Activated CD4-positive, alpha-beta T cell treated with anti-CD3 and anti-CD28 coated beads for 36 hours (primary cell): ENCODE measurements at regions of chr7 and their contacts with region 1.

Region 1: GRCh38 chr7:43700059-43700501 is 29.2 kb downstream of the COA1 start:
- DNase-seq: no peak
- ATAC-seq: peak; percentile 42
- H3K4me3 Mint-ChIP-seq: no peak overlapping the region
- H3K27ac Mint-ChIP-seq: no peak overlapping the region
- H3K4me1 Mint-ChIP-seq: peaks cover 56% of the 10 kb centered on the region
- H3K27me3 Mint-ChIP-seq: no peaks in the 10 kb centered on the region

Region 2: GRCh38 chr7:43572516-43573049 is 127.5 kb before region 1 on chr7:
- CTCF ChIA-PET with region 1: interaction called, 22 read pairs
- POLR2A ChIA-PET with region 1: no interaction called
- intact Hi-C with region 1: no loop called
- DNase-seq: peak; percentile 65
- ATAC-seq: peak; percentile 91
- H3K4me3 Mint-ChIP-seq: no peak overlapping the region
- H3K27ac Mint-ChIP-seq: no peak overlapping the region
- H3K4me1 Mint-ChIP-seq: peaks cover 24% of the 10 kb centered on the region
- H3K27me3 Mint-ChIP-seq: peaks cover 2% of the 10 kb centered on the region

Region 3: GRCh38 chr7:43619213-43620012 is 80.7 kb before region 1 on chr7:
- CTCF ChIA-PET with region 1: interaction called, 19 read pairs
- POLR2A ChIA-PET with region 1: interaction called, 4 read pairs
- intact Hi-C with region 1: loop called in 1 of 2 experiments (anchors 2 kb)
- DNase-seq: no peak
- ATAC-seq: no peak
- H3K4me3 Mint-ChIP-seq: no peak overlapping the region
- H3K27ac Mint-ChIP-seq: no peak overlapping the region
- H3K4me1 Mint-ChIP-seq: peaks cover 54% of the 10 kb centered on the region
- H3K27me3 Mint-ChIP-seq: no peaks in the 10 kb centered on the region

Region 4: DNA sequence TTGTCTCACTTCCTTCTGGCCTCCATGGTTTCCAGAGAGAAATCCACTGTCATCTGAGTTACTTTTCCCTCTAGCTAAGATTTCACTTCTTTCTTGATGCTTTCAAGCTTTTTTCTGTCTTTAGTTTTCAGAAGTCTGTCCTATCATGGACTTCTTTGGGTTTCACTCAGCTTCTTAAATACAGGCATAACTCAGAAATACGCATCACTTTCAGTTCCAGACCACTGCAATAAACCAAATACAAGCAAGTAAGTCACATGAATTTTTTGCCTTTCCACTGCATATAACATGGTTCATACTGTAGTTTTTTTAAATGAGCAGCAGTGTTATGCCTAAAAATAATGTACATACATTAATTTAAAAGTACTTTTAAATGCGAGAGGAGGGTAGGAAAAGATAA is 68.5 kb before region 1 on chr7:
- CTCF ChIA-PET with region 1: interaction called, 13 read pairs
- POLR2A ChIA-PET with region 1: no interaction called
- intact Hi-C with region 1: no loop called
- DNase-seq: no peak
- ATAC-seq: peak; percentile 70
- H3K4me3 Mint-ChIP-seq: no peak overlapping the region
- H3K27ac Mint-ChIP-seq: peak overlapping the region; percentile 79
- H3K4me1 Mint-ChIP-seq: peaks cover 90% of the 10 kb centered on the region
- H3K27me3 Mint-ChIP-seq: no peaks in the 10 kb centered on the region

Region 5: GRCh38 chr7:43647673-43648472 is 52.2 kb before region 1 on chr7:
- CTCF ChIA-PET with region 1: interaction called, 54 read pairs
- POLR2A ChIA-PET with region 1: interaction called, 7 read pairs
- intact Hi-C with region 1: loop called (anchors 1 kb)
- DNase-seq: peak; percentile 77
- ATAC-seq: peak; percentile 74
- H3K4me3 Mint-ChIP-seq: peak overlapping the region; percentile 66
- H3K27ac Mint-ChIP-seq: peak overlapping the region; percentile 98
- H3K4me1 Mint-ChIP-seq: peaks cover 95% of the 10 kb centered on the region
- H3K27me3 Mint-ChIP-seq: no peaks in the 10 kb centered on the region

Region 6: GRCh38 chr7:43669286-43670081 is 30.6 kb before region 1 on chr7:
- CTCF ChIA-PET with region 1: interaction called, 19 read pairs
- POLR2A ChIA-PET with region 1: interaction called, 9 read pairs
- intact Hi-C with region 1: no loop called
- DNase-seq: peak; percentile 93
- ATAC-seq: peak; percentile 85
- H3K4me3 Mint-ChIP-seq: peak overlapping the region; percentile 68
- H3K27ac Mint-ChIP-seq: peak overlapping the region; percentile 94
- H3K4me1 Mint-ChIP-seq: peaks cover 84% of the 10 kb centered on the region
- H3K27me3 Mint-ChIP-seq: no peaks in the 10 kb centered on the region

Region 7: GRCh38 chr7:43884617-43885016 is 184.5 kb after region 1 on chr7:
- CTCF ChIA-PET with region 1: no interaction called
- POLR2A ChIA-PET with region 1: no interaction called
- intact Hi-C with region 1: no loop called
- DNase-seq: no peak
- ATAC-seq: no peak
- H3K4me3 Mint-ChIP-seq: no peak overlapping the region
- H3K27ac Mint-ChIP-seq: no peak overlapping the region
- H3K4me1 Mint-ChIP-seq: peaks cover 12% of the 10 kb centered on the region
- H3K27me3 Mint-ChIP-seq: no peaks in the 10 kb centered on the region